CD14-positive monocyte (primary cell): ENCODE measurements at regions of chr1 and their contacts with region 1.

Region 1: DNA sequence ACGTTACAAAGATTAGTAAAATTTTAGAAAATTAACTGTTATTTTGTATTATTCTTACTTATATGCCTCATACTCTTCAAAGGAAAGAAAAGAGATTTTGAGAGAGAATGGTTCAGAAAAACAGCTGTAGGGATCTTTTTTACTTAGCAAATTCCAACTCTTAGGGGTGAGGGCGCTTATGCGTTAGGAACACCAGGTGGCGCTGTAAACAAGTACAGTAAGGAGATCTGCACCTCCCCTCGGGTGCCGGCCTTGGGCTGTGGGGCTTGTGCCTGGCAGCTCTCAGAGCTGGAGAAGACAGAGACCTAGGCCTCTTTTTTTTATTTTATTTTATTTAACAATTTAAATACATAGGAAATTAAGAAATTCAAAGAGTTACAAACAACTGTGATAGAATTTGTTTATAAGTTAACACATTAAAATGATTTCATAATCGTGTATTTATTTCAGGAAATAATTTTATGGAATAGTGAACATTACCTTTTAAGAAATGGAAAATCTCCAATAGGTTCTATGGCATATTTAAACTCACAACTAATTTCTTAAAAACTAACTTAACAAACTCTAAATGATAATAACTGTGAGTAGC is 32.6 kb downstream of the UTP25 start:
- DNase-seq: peak; percentile 48 to 66 (median 60)
- H3K4me3 ChIP-seq: no peak overlapping the region
- H3K4me3 Mint-ChIP-seq: no peak overlapping the region
- H3K27ac ChIP-seq: no peak overlapping the region
- H3K27ac Mint-ChIP-seq: no peak overlapping the region
- H3K4me1 ChIP-seq: no peaks in the 10 kb centered on the region
- H3K4me1 Mint-ChIP-seq: no peaks in the 10 kb centered on the region
- H3K27me3 ChIP-seq: no peaks in the 10 kb centered on the region
- H3K27me3 Mint-ChIP-seq: peaks cover 3 to 8% (median 8%) of the 10 kb centered on the region in 3 donors
- CTCF ChIP-seq: peak; percentile 94

Region 2: GRCh38 chr1:209835782-209836298 is 24.5 kb before region 1 on chr1:
- intact Hi-C with region 1: no loop called
- DNase-seq: no peak
- H3K4me3 ChIP-seq: no peak overlapping the region
- H3K4me3 Mint-ChIP-seq: no peak overlapping the region
- H3K27ac ChIP-seq: no peak overlapping the region
- H3K27ac Mint-ChIP-seq: no peak overlapping the region
- H3K4me1 ChIP-seq: no peaks in the 10 kb centered on the region
- H3K4me1 Mint-ChIP-seq: no peaks in the 10 kb centered on the region
- H3K27me3 ChIP-seq: no peaks in the 10 kb centered on the region
- H3K27me3 Mint-ChIP-seq: no peaks in the 10 kb centered on the region
- CTCF ChIP-seq: no peak

Region 3: GRCh38 chr1:209965996-209966395 is 105.6 kb after region 1 on chr1:
- intact Hi-C with region 1: no loop called
- DNase-seq: no peak
- H3K4me3 ChIP-seq: no peak overlapping the region
- H3K4me3 Mint-ChIP-seq: no peak overlapping the region
- H3K27ac ChIP-seq: no peak overlapping the region
- H3K27ac Mint-ChIP-seq: no peak overlapping the region
- H3K4me1 ChIP-seq: no peaks in the 10 kb centered on the region
- H3K4me1 Mint-ChIP-seq: no peaks in the 10 kb centered on the region
- H3K27me3 ChIP-seq: no peaks in the 10 kb centered on the region
- H3K27me3 Mint-ChIP-seq: peaks cover 0 to 1% (median 1%) of the 10 kb centered on the region in 3 donors
- CTCF ChIP-seq: no peak

Region 4: GRCh38 chr1:210311726-210312493 is 451.5 kb after region 1 on chr1:
- intact Hi-C with region 1: loop called in 1 of 2 experiments (anchors 5 kb)
- DNase-seq: no peak
- H3K4me3 ChIP-seq: no peak overlapping the region
- H3K4me3 Mint-ChIP-seq: peak overlapping the region in 1 of 2 donors; percentile 89
- H3K27ac ChIP-seq: no peak overlapping the region
- H3K27ac Mint-ChIP-seq: peak overlapping the region in 1 of 7 donors; percentile 43
- H3K4me1 ChIP-seq: peaks cover 4 to 5% of the 10 kb centered on the region in 2 donors
- H3K4me1 Mint-ChIP-seq: peaks cover 6% of the 10 kb centered on the region
- H3K27me3 ChIP-seq: peaks cover 10% of the 10 kb centered on the region in 2 donors
- H3K27me3 Mint-ChIP-seq: peaks cover 15 to 29% (median 19%) of the 10 kb centered on the region in 3 donors
- CTCF ChIP-seq: no peak